Left cardiac atrium (tissue), 4 donors: ENCODE measurements at regions of chr4 and their contacts with region 1.

Region 1: DNA sequence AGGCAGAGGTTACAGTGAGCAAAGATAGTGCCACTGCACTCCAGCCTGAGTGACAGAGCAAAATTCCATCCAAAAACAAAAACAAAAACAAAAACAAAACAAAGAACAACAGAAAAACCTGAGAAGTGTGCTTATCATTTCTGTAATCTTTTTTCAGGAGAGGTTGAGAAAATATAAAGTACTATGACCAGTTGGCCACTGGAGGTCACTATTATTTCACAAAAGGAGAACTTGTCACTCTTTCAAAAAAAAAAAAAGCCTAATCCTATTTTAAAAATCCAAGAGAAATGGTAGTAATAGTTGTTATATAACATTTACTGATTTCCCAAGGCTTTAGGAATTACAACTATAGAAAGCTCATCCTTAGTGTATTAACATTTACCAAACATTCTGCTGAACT is 24.9 kb upstream of the RNF150 start:
- DNase-seq: no peak
- ATAC-seq: no peak

Region 2: GRCh38 chr4:141058739-141059512 is 99.3 kb before region 1 on chr4:
- intact Hi-C with region 1: no loop called
- DNase-seq: no peak
- ATAC-seq: no peak

Region 3: DNA sequence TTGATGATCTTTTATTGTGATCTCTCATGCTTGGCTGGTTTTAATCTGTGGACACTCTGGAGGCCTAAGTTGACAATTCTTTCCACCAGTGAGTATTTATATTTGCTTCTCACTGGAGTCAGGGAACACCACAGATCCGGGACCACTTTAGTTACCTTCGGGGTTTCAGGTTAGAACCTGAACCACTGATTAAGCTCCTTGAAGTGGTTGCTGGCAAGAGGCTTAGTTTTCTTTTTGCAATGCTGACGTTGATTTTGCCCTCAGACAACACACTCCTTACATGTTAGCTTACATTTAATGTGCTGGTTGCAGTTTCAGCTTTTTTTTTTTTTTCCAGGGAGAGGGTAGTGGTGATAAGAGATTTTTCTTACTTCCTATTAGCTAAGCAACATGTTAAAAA is 51.9 kb after region 1 on chr4:
- intact Hi-C with region 1: loop called in 1 of 2 experiments (anchors 5 kb)
- DNase-seq: no peak
- ATAC-seq: no peak